H1 (cell line): ENCODE measurements at regions of chr14 and their contacts with region 1.

Region 1: DNA sequence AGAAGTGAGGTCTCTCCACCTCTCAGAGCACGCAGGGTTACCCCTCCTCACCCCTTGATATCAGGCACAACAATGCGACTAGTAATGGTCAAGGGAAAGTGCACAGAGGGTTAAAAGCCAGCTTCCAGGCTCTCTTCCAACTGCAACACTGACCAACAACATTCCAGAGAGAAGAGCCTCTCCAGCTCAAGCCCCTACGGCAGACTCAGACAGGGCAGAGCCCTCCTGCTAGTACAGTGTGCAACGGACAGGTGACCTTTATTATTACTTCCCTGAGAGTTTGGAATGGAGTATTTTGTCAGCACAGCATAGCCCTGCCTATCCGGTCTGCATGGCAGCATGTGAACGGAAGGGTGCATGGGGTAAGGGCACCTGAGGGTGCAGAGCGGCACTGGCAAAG is 73.0 kb downstream of the PTPN21 start:
- DNase-seq: no peak
- H3K4me3 ChIP-seq: no peak overlapping the region
- H3K27ac ChIP-seq: 0 out of 2 replicates have a peak overlapping the region, but pooled peaks have one; percentile 15
- H3K4me1 ChIP-seq: peaks cover 6 to 21% (median 13%) of the 10 kb centered on the region in 4 experiments; a peak in 6 of 7 replicates
- H3K27me3 ChIP-seq: no peaks in the 10 kb centered on the region
- CTCF ChIP-seq: no peak
- EP300 ChIP-seq: no peak
- POLR2A ChIP-seq: no peak
- RAD21 ChIP-seq: no peak

Region 2: DNA sequence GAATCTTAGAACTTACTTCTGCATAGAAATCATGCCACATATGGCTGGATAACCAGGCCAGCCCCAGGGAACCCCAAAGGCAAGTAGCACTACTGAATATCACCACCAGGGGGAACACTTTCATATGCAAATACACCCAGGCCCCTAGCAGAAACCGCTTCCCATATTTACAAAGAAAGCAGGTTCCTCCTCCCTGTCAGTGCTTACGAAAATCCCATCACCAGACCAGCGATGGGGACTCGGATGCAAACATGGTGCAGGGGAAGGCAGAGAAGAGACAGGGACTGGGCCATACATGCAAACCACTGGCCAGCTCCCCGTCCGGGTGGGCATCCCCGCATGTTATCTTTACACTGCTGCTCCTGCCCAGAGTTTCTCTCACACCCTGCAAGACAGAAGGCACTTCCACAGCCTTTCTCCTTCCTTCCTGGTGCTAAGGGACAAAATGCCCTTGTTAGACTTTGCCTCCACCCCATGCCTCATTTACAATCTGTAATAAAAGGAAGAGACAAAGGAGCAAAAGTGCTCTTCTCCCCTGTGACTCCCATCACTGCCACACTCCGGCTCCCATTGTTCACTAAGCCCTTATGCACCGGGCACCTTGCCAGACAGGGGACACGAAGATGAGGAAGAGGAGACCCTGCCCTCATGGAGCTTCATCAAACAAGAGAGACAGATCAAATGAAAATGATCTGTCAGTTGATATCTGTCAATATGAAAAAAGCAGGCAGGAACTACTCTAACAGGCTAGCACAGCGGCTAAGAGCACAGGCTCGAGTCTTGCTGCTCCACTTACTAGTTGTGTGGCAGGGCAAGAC is 10.7 kb after region 1 on chr14:
- CTCF ChIA-PET with region 1: interaction called, 19 read pairs
- POLR2A ChIA-PET with region 1: interaction called, 3 read pairs
- DNase-seq: peak; percentile 15 to 84
- H3K4me3 ChIP-seq: no peak overlapping the region
- H3K27ac ChIP-seq: no peak overlapping the region
- H3K4me1 ChIP-seq: peaks cover 0 to 3% (median 1%) of the 10 kb centered on the region in 4 experiments; a peak in 2 of 7 replicates
- H3K27me3 ChIP-seq: no peaks in the 10 kb centered on the region
- CTCF ChIP-seq: peak; percentile 59 to 83 (median 70)
- EP300 ChIP-seq: no peak
- POLR2A ChIP-seq: no peak
- RAD21 ChIP-seq: peak; percentile 65 to 72

Region 3: DNA sequence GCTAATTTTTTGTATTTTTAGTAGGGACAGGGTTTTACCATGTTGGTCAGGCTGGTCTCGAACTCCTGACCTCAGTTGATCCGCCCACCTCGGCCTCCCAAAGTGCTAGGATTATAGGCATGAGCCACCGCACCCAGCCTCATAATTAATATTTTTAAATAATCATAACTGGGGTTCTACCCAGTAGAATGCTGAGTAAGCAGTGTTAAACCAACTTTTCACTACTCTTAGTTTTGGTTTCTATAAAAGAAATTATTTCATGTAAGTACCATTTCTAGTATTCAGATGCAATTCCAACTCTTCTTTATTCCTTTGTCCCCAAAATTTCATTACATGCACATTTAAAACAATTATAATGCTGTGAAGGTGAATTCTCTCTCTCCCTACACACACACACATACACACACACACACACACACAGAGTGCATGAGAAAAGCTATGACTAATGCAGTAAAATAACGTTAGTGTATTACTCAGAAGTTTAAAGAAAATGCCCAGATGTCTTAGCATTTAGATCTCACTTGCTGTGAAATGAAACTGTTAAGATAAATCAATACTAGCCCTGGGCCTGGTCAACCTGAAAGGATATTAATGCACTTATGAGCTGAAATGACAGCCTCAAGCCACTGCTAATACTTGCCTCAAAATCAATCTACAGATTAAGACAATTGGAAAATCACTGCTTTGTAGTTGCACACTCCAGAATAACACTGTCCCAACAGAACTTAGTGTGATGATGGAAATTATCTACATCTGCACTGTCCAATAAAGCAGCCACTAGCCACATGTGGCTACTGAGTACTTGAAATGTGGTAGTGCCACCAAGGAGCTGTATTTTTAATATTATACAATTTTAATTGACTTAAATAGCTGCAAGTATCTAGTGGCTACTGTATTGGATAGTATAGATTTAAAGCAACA is 37.1 kb after region 1 on chr14:
- CTCF ChIA-PET with region 1: no interaction called
- POLR2A ChIA-PET with region 1: no interaction called
- DNase-seq: no peak
- H3K4me3 ChIP-seq: no peak overlapping the region
- H3K27ac ChIP-seq: no peak overlapping the region
- H3K4me1 ChIP-seq: no peaks in the 10 kb centered on the region
- H3K27me3 ChIP-seq: no peaks in the 10 kb centered on the region
- CTCF ChIP-seq: no peak
- EP300 ChIP-seq: no peak
- POLR2A ChIP-seq: no peak
- RAD21 ChIP-seq: no peak